Naive thymus-derived CD4-positive, alpha-beta T cell (primary cell): ENCODE measurements at regions of chr1 and their contacts with region 1.

Region 1: GRCh38 chr1:200979574-200980451 is 43.7 kb downstream of the KIF21B start:
- DNase-seq: peak in 8 of 9 donors; percentile 25 to 71 (median 40)
- ATAC-seq: peak; percentile 62
- H3K4me3 ChIP-seq: no peak overlapping the region
- H3K4me3 Mint-ChIP-seq: no peak overlapping the region
- H3K27ac ChIP-seq: no peak overlapping the region
- H3K27ac Mint-ChIP-seq: peak overlapping the region in 6 of 9 donors; percentile 32 to 77 (median 50)
- H3K4me1 ChIP-seq: no peaks in the 10 kb centered on the region
- H3K4me1 Mint-ChIP-seq: peaks cover 0 to 6% (median 0%) of the 10 kb centered on the region in 7 donors
- H3K27me3 ChIP-seq: no peaks in the 10 kb centered on the region
- H3K27me3 Mint-ChIP-seq: no peaks in the 10 kb centered on the region

Region 2: GRCh38 chr1:201015551-201016091 is 35.8 kb after region 1 on chr1:
- CTCF ChIA-PET with region 1: interaction called, 23 read pairs
- POLR2A ChIA-PET with region 1: interaction called, 3 read pairs
- intact Hi-C with region 1: loop called in 1 of 2 experiments (anchors 5 kb)
- DNase-seq: no peak
- ATAC-seq: no peak
- H3K4me3 ChIP-seq: no peak overlapping the region
- H3K4me3 Mint-ChIP-seq: peak overlapping the region in 9 of 10 donors; percentile 33 to 100 (median 65)
- H3K27ac ChIP-seq: peak overlapping the region; percentile 15
- H3K27ac Mint-ChIP-seq: peak overlapping the region; percentile 69 to 98 (median 92)
- H3K4me1 ChIP-seq: peaks cover 80 to 98% of the 10 kb centered on the region in 2 donors
- H3K4me1 Mint-ChIP-seq: peaks cover 78 to 98% (median 92%) of the 10 kb centered on the region in 7 donors
- H3K27me3 ChIP-seq: no peaks in the 10 kb centered on the region
- H3K27me3 Mint-ChIP-seq: no peaks in the 10 kb centered on the region